AG04449 (cell line): ENCODE measurements at regions of chr20 and their contacts with region 1.

Region 1: GRCh38 chr20:35329435-35330139 is 37.4 kb upstream of the FAM83C start:
- DNase-seq: no peak
- H3K4me3 ChIP-seq: no peak overlapping the region
- CTCF ChIP-seq: peak; percentile 32

Region 2: GRCh38 chr20:35077341-35077740 is 252.2 kb before region 1 on chr20:
- CTCF ChIA-PET with region 1: no interaction called
- POLR2A ChIA-PET with region 1: no interaction called
- DNase-seq: no peak
- H3K4me3 ChIP-seq: no peak overlapping the region
- CTCF ChIP-seq: no peak

Region 3: GRCh38 chr20:35318502-35319157 is 11.0 kb before region 1 on chr20:
- CTCF ChIA-PET with region 1: interaction called, 12 read pairs
- POLR2A ChIA-PET with region 1: interaction called, 3 read pairs
- DNase-seq: no peak
- H3K4me3 ChIP-seq: no peak overlapping the region
- CTCF ChIP-seq: no peak

Region 4: DNA sequence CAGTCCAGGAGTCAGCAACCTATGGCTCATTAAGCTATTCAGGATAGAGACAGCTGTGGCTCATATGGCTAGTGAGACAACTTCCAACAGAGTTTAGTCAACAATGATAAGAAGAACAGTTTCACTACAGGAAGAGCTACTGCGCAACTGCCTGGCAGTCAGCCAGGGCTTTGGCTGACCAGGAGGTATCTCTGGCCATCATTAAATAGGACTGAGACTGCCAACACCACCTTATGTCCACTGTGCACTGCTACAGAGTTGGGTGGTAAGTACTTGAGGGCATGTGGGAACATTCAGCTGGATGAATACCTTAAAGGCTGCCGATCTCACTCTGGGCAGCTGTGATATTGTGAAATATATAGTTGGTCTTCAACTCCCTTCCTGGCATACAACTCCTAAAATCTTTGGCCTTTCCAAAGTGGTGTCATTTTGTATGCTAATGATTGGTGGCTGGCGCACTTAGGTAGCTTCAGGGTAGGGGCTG is 14.8 kb after region 1 on chr20:
- CTCF ChIA-PET with region 1: interaction called, 20 read pairs
- POLR2A ChIA-PET with region 1: no interaction called
- DNase-seq: peak; percentile 51
- H3K4me3 ChIP-seq: no peak overlapping the region
- CTCF ChIP-seq: no peak